ENCODE measurements at regions of chr2 and their contacts with region 1.

Region 1: GRCh38 chr2:203453858-203454451 is 81.1 kb downstream of the RAPH1 start:
- DNase-seq: no peak
- H3K4me3 ChIP-seq: no peak overlapping the region
- H3K27ac ChIP-seq: no peak overlapping the region
- H3K4me1 ChIP-seq: no peaks in the 10 kb centered on the region
- H3K27me3 ChIP-seq: no peaks in the 10 kb centered on the region
- CTCF ChIP-seq: peak in 2 of 3 experiments; percentile 52 to 66; a peak in 3 of 4 replicates
- EP300 ChIP-seq: no peak
- POLR2A ChIP-seq: no peak
- RAD21 ChIP-seq: peak; percentile 72 to 74

Region 2: GRCh38 chr2:203340791-203341487 is 113.0 kb before region 1 on chr2:
- CTCF ChIA-PET with region 1: no interaction called
- POLR2A ChIA-PET with region 1: no interaction called
- DNase-seq: no peak
- H3K4me3 ChIP-seq: no peak overlapping the region
- H3K27ac ChIP-seq: peak overlapping the region; percentile 76
- H3K4me1 ChIP-seq: peaks cover 2 to 10% (median 3%) of the 10 kb centered on the region in 4 experiments
- H3K27me3 ChIP-seq: no peaks in the 10 kb centered on the region
- CTCF ChIP-seq: no peak
- EP300 ChIP-seq: no peak
- POLR2A ChIP-seq: no peak; a peak in 1 of 3 replicates
- RAD21 ChIP-seq: no peak

Region 3: DNA sequence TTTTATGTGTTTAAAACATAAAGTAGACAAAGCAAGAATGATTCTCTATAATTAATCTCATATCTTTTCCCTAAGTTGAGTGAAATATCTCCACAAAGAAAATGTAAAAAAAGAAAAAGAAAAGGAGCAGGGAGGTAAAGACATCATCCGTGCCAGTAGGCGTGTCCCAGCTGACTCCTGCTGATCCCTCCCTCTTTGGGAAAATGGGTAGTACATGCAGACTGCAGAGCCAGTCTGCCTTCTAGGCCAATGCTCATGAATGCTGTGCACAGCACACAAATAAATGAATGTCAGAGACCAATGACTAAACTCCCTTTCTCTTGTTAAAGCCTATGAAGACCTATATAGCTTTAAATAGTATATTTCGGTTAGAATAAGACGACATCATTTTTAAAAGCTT is 16.4 kb after region 1 on chr2:
- CTCF ChIA-PET with region 1: interaction called, 25 read pairs
- POLR2A ChIA-PET with region 1: no interaction called
- DNase-seq: no peak
- H3K4me3 ChIP-seq: no peak overlapping the region
- H3K27ac ChIP-seq: no peak overlapping the region
- H3K4me1 ChIP-seq: peaks cover 0 to 2% (median 0%) of the 10 kb centered on the region in 4 experiments; a peak in 1 of 7 replicates
- H3K27me3 ChIP-seq: peaks cover 0 to 1% (median 0%) of the 10 kb centered on the region in 4 experiments; a peak in 1 of 7 replicates
- CTCF ChIP-seq: no peak
- EP300 ChIP-seq: no peak
- POLR2A ChIP-seq: no peak
- RAD21 ChIP-seq: no peak

Region 4: GRCh38 chr2:203498161-203498560 is 44.2 kb after region 1 on chr2:
- CTCF ChIA-PET with region 1: no interaction called
- POLR2A ChIA-PET with region 1: no interaction called
- DNase-seq: no peak
- H3K4me3 ChIP-seq: no peak overlapping the region
- H3K27ac ChIP-seq: no peak overlapping the region
- H3K4me1 ChIP-seq: no peaks in the 10 kb centered on the region
- H3K27me3 ChIP-seq: no peaks in the 10 kb centered on the region
- CTCF ChIP-seq: no peak
- EP300 ChIP-seq: no peak
- POLR2A ChIP-seq: no peak
- RAD21 ChIP-seq: no peak